ENCODE measurements at regions of chr5 and their contacts with region 1.

Region 1: GRCh38 chr5:172958331-172959046 is 735 bp upstream of the RPL26L1 start:
- DNase-seq: peak; percentile 83
- ATAC-seq: peak; percentile 76
- H3K4me3 Mint-ChIP-seq: peak overlapping the region; percentile 93
- H3K27ac Mint-ChIP-seq: peak overlapping the region; percentile 94
- H3K4me1 Mint-ChIP-seq: peaks cover 17% of the 10 kb centered on the region
- H3K27me3 Mint-ChIP-seq: no peaks in the 10 kb centered on the region

Region 2: GRCh38 chr5:172697123-172698121 is 261.1 kb before region 1 on chr5:
- CTCF ChIA-PET with region 1: no interaction called
- POLR2A ChIA-PET with region 1: no interaction called
- intact Hi-C with region 1: loop called in 1 of 2 experiments (anchors 1 kb)
- DNase-seq: peak; percentile 91
- ATAC-seq: peak; percentile 95
- H3K4me3 Mint-ChIP-seq: peak overlapping the region; percentile 68
- H3K27ac Mint-ChIP-seq: peak overlapping the region; percentile 75
- H3K4me1 Mint-ChIP-seq: peaks cover 11% of the 10 kb centered on the region
- H3K27me3 Mint-ChIP-seq: peaks cover 13% of the 10 kb centered on the region

Region 3: DNA sequence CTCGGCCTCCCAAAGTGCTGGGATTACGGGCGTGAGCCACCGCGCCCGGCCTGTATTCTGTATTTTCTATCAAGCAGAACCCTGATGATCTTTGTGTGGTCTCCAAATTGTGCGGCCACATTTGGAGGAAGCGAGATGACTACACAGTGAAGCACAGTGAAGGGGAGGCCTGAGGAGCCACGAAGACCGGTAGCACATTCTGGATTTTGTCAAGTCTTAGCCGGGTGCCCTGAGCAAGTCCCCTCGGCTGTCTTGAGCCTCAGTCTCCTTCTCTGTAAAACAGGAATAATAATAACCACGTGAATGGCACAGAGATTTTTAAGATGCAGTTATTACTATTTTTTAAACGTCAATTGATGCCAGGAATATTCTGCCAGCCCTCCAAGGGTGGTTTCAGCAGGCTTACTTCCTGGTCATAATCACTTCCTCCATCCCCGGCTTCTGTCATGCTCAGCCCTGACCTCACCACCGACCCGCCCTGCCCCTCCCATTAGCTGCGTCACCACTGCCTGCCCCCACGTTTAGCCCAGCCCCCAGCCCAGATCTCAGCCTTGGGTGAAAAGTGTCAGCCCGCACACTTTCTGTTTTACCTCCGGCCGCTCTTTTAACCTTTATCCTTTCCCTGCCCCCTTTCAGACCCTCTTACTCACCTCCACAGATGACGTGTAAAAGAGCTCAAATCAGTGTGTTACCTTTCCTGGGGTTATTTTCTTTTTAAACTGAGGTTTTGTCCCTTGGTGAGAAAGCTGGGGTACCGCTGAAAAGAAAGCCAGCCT is 151.4 kb before region 1 on chr5:
- CTCF ChIA-PET with region 1: no interaction called
- POLR2A ChIA-PET with region 1: no interaction called
- intact Hi-C with region 1: loop called in 1 of 2 experiments (anchors 1 kb)
- DNase-seq: peak; percentile 98
- ATAC-seq: peak; percentile 97
- H3K4me3 Mint-ChIP-seq: peak overlapping the region; percentile 54
- H3K27ac Mint-ChIP-seq: peak overlapping the region; percentile 84
- H3K4me1 Mint-ChIP-seq: peaks cover 17% of the 10 kb centered on the region
- H3K27me3 Mint-ChIP-seq: no peaks in the 10 kb centered on the region

Region 4: DNA sequence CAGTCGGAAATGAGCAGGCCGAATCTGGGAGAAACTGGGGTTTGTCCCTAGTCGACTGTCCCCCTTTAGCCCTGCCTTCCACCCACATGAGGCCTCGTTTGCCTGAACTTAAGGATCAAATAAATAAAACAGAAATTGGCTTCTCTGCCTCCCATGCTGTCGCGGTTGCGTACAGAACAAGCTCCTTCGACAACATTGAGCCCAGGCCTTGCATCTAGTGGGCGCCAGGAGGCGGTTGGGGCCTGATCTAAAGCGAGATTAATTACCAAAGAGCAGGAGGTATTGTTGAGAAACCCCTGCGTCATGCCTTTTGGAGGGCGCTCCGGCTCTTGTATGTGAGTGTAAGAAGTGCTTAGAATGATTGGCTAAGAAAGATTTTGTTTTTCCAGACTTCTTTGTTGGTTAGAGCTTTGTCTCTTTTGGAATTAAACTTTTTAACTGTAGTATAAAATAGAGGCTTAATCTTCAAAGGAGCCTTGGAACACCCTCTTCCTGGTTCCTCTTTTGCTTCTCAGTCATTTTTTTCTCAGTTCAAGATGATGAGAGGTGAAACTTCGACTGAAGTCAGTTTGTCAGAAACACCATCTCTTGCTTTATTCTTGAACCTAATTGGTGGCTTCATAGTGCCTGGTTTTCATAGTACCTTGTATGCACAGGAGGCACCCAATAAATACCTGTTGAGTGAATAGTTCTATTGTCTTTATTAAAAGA is 25.9 kb after region 1 on chr5:
- CTCF ChIA-PET with region 1: interaction called, 7 read pairs
- POLR2A ChIA-PET with region 1: interaction called, 11 read pairs
- intact Hi-C with region 1: loop called (anchors 1 kb)
- DNase-seq: peak; percentile 90
- ATAC-seq: peak; percentile 79
- H3K4me3 Mint-ChIP-seq: peak overlapping the region; percentile 96
- H3K27ac Mint-ChIP-seq: peak overlapping the region; percentile 99
- H3K4me1 Mint-ChIP-seq: peaks cover 37% of the 10 kb centered on the region
- H3K27me3 Mint-ChIP-seq: no peaks in the 10 kb centered on the region

Region 5: DNA sequence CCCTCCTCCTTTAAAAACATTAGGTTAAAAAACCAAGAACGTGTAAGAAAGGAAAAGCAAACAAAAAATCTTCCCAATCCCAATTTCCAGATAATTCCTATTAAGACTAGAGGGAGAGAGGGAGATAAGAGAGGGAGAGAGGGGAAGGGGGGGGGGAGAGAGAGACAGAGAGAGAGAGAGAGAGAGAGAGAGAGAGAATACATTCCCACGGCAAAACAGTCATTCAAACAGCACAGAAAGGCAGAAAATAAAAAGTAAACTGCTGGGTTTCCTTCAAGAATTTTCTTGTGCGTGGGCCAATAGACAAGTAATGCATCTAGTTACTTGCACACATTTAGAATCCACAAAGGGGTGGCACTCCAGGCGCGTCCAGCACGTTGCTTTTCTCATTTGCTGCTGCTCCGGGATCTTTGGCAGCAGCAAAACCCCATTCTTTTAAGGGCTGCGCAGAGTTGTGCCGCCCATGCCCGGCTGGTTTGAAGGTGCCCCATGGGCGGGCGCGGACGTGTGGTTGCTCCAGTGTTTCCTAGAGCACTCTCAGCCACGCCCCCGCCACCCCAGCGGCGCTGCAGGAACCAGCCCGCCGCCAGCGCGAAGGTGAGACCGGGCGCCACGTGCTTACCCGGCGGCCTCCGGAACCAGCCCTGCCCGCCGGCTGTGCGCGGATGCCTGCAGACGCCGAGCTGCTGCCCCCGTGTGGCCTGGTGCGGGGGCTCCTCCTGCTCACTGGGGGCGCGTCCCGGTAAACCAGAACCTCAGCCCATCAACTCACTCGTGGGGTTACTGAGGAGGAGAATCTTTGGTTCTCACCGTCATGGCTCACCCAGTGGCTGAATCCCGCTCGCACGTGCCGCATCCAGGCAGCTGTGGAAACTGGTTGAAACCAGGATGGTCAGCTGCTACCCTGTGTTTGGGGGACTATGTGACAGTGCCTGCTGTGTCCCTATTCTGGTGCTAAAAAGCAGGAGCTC is 325.1 kb after region 1 on chr5:
- CTCF ChIA-PET with region 1: no interaction called
- POLR2A ChIA-PET with region 1: no interaction called
- intact Hi-C with region 1: loop called in 1 of 2 experiments (anchors 5 kb)
- DNase-seq: peak; percentile 90
- ATAC-seq: peak; percentile 96
- H3K4me3 Mint-ChIP-seq: peak overlapping the region; percentile 25
- H3K27ac Mint-ChIP-seq: no peak overlapping the region
- H3K4me1 Mint-ChIP-seq: peaks cover 9% of the 10 kb centered on the region
- H3K27me3 Mint-ChIP-seq: peaks cover 44% of the 10 kb centered on the region

Measured in activated CD4-positive, alpha-beta T cell treated with anti-CD3 and anti-CD28 coated beads for 36 hours (primary cell).